Heart right ventricle (tissue), 16 donors: ENCODE measurements at regions of chr2 and their contacts with region 1.

Region 1: GRCh38 chr2:133561045-133561852 is 7.0 kb downstream of the NCKAP5 start:
- DNase-seq: peak in 1 of 2 donors; percentile 12
- ATAC-seq: peak in 2 of 8 donors; percentile 42 to 58
- H3K4me3 ChIP-seq: no peak overlapping the region
- H3K27ac ChIP-seq: no peak overlapping the region
- H3K4me1 ChIP-seq: peaks cover 0 to 19% (median 0%) of the 10 kb centered on the region in 9 donors
- H3K27me3 ChIP-seq: no peaks in the 10 kb centered on the region
- CTCF ChIP-seq: peak; percentile 31 to 76 (median 63)

Region 2: DNA sequence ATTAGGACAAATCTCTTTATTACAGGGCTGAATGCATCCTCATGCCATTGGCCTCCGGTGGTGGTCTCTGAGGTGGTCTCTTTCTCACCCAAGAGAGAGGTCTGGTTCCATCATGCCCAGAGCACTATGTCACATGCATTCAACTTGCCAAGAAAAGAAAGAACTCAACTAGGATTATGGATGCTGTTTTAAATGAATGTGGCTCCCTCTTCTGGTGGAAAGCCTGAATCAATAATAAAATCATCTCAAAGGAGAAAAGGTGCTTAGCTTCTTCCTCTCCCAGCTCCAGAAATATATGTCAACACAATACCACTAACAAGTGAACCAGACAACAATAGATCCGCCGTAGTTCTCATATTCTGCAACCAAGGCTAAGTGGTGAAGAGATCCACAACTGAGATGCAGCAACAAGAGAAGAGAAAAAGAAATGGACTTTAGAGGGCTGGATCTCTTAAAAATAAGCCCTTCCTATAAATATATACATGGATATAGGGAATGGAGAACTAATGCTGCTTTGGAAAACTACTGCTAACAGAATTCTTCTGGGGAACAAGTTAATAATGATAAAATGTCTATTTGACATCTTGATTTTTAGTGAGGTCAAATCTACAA is 389.8 kb before region 1 on chr2:
- intact Hi-C with region 1: loop called in 1 of 10 experiments (anchors 10 kb)
- DNase-seq: peak in 1 of 2 donors; percentile 4
- ATAC-seq: peak in 1 of 8 donors; percentile 35
- H3K4me3 ChIP-seq: no peak overlapping the region
- H3K27ac ChIP-seq: no peak overlapping the region
- H3K4me1 ChIP-seq: no peaks in the 10 kb centered on the region
- H3K27me3 ChIP-seq: no peaks in the 10 kb centered on the region
- CTCF ChIP-seq: peak in 8 of 9 donors; percentile 18 to 64 (median 59)

Region 3: DNA sequence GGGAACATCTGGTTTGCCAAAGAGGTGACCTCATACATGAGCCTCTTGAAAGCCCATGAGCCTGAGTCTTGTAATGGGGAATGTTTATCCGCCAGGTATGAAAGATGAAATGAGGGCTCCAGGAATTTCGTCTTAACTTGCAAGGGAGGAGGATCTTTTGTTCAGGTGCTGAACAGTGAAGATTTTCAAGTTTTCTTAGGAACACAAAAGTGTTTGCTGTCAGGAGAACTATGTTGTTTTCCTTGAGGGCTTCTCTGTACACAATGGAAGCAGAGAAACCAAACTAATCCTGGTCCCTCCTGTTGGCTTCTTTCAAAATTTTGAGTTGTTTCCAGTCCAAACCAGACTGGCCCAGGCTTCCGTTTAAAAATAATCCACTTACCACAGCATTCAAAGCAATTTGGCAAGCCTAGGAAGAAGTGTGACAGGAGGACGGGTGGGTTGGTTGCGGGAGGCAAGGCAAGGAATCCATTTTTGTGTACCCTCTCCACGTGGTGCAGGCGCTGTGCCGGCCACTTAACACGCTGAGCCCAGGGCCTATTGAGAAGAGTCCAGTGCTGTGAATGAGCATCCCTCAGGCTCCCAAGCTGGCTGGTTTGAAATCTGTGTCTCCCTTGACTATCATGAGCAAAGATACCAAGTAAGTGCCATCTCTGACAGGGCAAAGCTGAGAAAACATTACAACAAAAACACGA is 154.1 kb before region 1 on chr2:
- intact Hi-C with region 1: loop called in 1 of 10 experiments (anchors 10 kb)
- DNase-seq: no peak
- ATAC-seq: peak in 1 of 8 donors; percentile 31
- H3K4me3 ChIP-seq: no peak overlapping the region
- H3K27ac ChIP-seq: no peak overlapping the region
- H3K4me1 ChIP-seq: peaks cover 0 to 4% (median 0%) of the 10 kb centered on the region in 9 donors
- H3K27me3 ChIP-seq: no peaks in the 10 kb centered on the region
- CTCF ChIP-seq: no peak

Region 4: GRCh38 chr2:133674433-133675331 is 113.4 kb after region 1 on chr2:
- intact Hi-C with region 1: loop called in 1 of 10 experiments (anchors 10 kb)
- DNase-seq: peak; percentile 25 to 43
- ATAC-seq: peak; percentile 42 to 76 (median 66)
- H3K4me3 ChIP-seq: peak overlapping the region in 9 of 10 donors; percentile 4 to 48 (median 31)
- H3K27ac ChIP-seq: peak overlapping the region; percentile 4 to 82 (median 75)
- H3K4me1 ChIP-seq: peaks cover 2 to 38% (median 20%) of the 10 kb centered on the region in 9 donors
- H3K27me3 ChIP-seq: no peaks in the 10 kb centered on the region
- CTCF ChIP-seq: no peak

Region 5: DNA sequence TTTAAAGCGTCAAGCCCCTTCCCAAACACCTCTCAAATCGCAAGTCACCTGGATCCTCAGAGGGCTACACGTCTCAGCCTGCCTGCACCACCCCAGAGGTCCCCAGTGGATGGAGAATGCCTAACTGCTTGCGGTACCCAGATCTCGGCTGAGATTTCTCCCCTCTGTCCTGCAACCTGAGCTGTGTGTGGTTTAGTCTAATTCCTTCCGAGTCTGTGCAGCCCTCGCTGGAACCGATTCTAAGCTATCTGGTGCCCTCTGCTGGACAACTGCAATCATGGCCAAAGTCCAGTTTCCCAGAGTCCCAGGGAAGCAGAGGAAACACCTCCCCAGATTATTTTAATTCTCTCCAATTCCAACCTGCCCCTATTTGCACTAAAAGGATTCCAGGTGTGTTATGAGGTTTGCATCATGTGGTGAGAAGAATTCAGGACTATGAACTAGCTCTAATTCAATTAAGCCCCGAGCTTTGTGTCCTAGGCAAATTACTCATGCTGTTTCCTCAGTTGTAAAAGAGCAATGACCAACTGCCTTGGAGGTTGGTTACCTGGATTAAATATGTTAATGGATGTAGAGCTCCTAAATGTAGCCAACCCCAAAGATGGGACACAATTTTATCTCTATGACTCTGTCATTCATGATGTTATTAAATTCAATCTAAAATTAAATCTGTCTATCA is 283.1 kb after region 1 on chr2:
- intact Hi-C with region 1: loop called in 2 of 10 experiments (anchors 10 kb)
- DNase-seq: peak in 1 of 2 donors; percentile 67
- ATAC-seq: peak; percentile 31 to 85 (median 70)
- H3K4me3 ChIP-seq: no peak overlapping the region
- H3K27ac ChIP-seq: no peak overlapping the region
- H3K4me1 ChIP-seq: peaks cover 0 to 16% (median 7%) of the 10 kb centered on the region in 9 donors
- H3K27me3 ChIP-seq: no peaks in the 10 kb centered on the region
- CTCF ChIP-seq: peak; percentile 65 to 91 (median 88)